ENCODE measurements at regions of chr16 and their contacts with region 1.

Region 1: DNA sequence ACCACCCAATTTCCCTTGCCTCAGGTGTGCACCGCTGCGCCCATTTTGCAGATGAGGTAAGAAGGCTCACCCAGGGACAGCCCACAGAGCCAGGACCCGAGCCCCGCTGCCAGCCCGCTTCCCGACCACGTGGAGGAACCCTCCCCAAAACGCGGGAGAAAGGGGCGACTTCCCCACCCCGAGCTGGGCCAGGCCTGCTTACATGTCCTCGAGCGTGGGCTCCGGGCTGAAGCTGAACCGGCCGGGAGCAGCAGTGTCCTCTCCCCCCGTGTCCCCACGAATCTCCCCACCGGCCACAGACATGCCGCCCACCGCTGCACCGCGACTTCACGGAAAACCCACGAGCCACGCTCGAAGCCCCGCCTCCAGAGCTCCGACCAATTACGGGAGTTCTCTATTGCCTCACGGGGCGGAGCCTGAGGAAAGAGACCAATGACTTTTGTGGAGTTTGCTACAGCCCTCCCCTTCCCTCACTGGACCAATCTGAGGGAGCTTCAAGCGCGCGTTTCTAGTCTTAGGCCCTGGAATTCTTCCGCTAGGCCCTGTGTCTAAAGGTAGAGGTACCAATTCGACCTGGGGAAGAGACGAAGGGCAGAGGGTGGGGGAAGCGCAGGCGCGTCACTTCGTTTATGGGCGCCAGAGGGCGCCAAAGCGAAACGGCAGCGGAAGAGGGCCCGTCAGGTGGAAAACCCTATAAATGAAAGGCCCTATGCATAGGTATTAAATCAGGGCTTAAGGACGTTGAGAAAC is at the start of gene DCTPP1:
- DNase-seq: peak; percentile 91
- ATAC-seq: peak; percentile 98
- H3K4me3 Mint-ChIP-seq: no peak within 1 kb of the TSS
- H3K27ac Mint-ChIP-seq: peak within 1 kb of the TSS; percentile 79
- H3K4me1 Mint-ChIP-seq: peaks cover 17% of the 10 kb centered on the region
- H3K27me3 Mint-ChIP-seq: peaks cover 22% of the 10 kb centered on the region
- CTCF ChIP-seq: peak; percentile 74
- total RNA-seq, gene DCTPP1: 69.0 to 72.2 TPM (median 70.5 TPM) in 3 replicates

Region 2: GRCh38 chr16:29975811-29976511 is 453.9 kb before region 1 on chr16:
- CTCF ChIA-PET with region 1: no interaction called
- POLR2A ChIA-PET with region 1: no interaction called
- DNase-seq: no peak
- ATAC-seq: no peak
- H3K4me3 Mint-ChIP-seq: peak overlapping the region; percentile 92
- H3K27ac Mint-ChIP-seq: peak overlapping the region; percentile 51; the same call in 1 of the 2 replicates
- H3K4me1 Mint-ChIP-seq: peaks cover 27% of the 10 kb centered on the region
- H3K27me3 Mint-ChIP-seq: peaks cover 21% of the 10 kb centered on the region
- CTCF ChIP-seq: no peak

Region 3: GRCh38 chr16:30407102-30407803 is 22.6 kb before region 1 on chr16 and contains the start of gene ZNF771:
- CTCF ChIA-PET with region 1: interaction called, 45 read pairs
- POLR2A ChIA-PET with region 1: no interaction called
- DNase-seq: peak; percentile 96
- ATAC-seq: peak; percentile 84
- H3K4me3 Mint-ChIP-seq: peak within 1 kb of the TSS; percentile 90
- H3K27ac Mint-ChIP-seq: peak within 1 kb of the TSS; percentile 93
- H3K4me1 Mint-ChIP-seq: peaks cover 20% of the 10 kb centered on the region
- H3K27me3 Mint-ChIP-seq: peaks cover 21% of the 10 kb centered on the region
- CTCF ChIP-seq: no peak
- total RNA-seq, gene ZNF771: 10.0 to 12.5 TPM (median 11.3 TPM) in 3 replicates

Region 4: GRCh38 chr16:30493941-30494488 is 64.2 kb after region 1 on chr16:
- CTCF ChIA-PET with region 1: interaction called, 10 read pairs
- POLR2A ChIA-PET with region 1: no interaction called
- DNase-seq: no peak
- ATAC-seq: no peak
- H3K4me3 Mint-ChIP-seq: no peak overlapping the region
- H3K27ac Mint-ChIP-seq: no peak overlapping the region
- H3K4me1 Mint-ChIP-seq: peaks cover 10% of the 10 kb centered on the region
- H3K27me3 Mint-ChIP-seq: peaks cover 9% of the 10 kb centered on the region; the same call in 1 of the 2 replicates
- CTCF ChIP-seq: no peak

Region 5: GRCh38 chr16:30541502-30542329 is 111.9 kb after region 1 on chr16:
- CTCF ChIA-PET with region 1: interaction called, 41 read pairs
- POLR2A ChIA-PET with region 1: no interaction called
- DNase-seq: no peak
- ATAC-seq: peak; percentile 52
- H3K4me3 Mint-ChIP-seq: no peak overlapping the region
- H3K27ac Mint-ChIP-seq: no peak overlapping the region
- H3K4me1 Mint-ChIP-seq: peaks cover 10% of the 10 kb centered on the region
- H3K27me3 Mint-ChIP-seq: no peaks in the 10 kb centered on the region
- CTCF ChIP-seq: no peak

Region 6: GRCh38 chr16:30602616-30603277 is 172.9 kb after region 1 on chr16:
- CTCF ChIA-PET with region 1: interaction called, 30 read pairs
- POLR2A ChIA-PET with region 1: no interaction called
- DNase-seq: no peak
- ATAC-seq: no peak
- H3K4me3 Mint-ChIP-seq: no peak overlapping the region
- H3K27ac Mint-ChIP-seq: peak overlapping the region; percentile 57; the same call in 1 of the 2 replicates
- H3K4me1 Mint-ChIP-seq: no peaks in the 10 kb centered on the region
- H3K27me3 Mint-ChIP-seq: no peaks in the 10 kb centered on the region
- CTCF ChIP-seq: no peak

Region 7: DNA sequence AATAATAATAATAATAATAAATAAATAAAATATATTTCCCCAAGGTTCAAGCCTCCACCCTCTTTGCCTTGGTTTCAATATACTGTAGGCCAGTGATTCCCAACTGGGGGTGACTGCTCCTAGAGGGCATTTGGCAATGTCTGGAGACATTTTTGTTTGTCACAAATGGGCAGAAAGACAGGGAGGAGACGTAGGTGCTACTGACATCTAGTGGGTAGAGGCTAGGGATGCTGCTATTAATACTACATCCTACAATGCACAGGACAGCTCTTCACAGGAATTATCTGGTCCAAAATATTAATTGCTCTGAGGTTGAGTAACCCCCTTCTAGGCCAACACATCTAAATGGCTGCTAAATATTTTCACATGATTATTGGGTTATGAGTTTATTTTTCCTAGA is 208.1 kb after region 1 on chr16:
- CTCF ChIA-PET with region 1: interaction called, 20 read pairs
- POLR2A ChIA-PET with region 1: interaction called, 3 read pairs
- DNase-seq: no peak
- ATAC-seq: peak; percentile 16
- H3K4me3 Mint-ChIP-seq: no peak overlapping the region
- H3K27ac Mint-ChIP-seq: no peak overlapping the region
- H3K4me1 Mint-ChIP-seq: peaks cover 7% of the 10 kb centered on the region
- H3K27me3 Mint-ChIP-seq: peaks cover 3% of the 10 kb centered on the region
- CTCF ChIP-seq: no peak

Region 8: DNA sequence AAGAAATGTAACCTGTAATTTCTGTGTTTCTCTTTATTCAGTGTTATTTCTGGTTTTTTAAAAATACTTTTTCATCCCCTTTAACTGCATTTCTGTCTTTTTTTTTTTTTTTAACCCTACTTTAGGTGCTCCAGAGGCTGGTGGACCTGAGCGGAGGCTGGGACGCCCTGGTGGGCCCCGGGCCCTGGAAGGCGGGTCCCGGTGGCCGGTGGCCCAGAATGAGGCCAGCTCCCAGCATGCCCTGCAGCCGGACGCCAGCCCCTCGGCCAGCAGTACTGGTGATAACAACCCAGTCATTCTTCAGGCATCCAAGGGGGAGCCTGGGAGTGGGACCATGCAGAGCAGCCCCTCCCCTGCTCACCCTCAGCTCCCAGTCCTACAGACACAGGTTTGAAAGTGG is 270.6 kb after region 1 on chr16:
- CTCF ChIA-PET with region 1: no interaction called
- POLR2A ChIA-PET with region 1: no interaction called
- DNase-seq: no peak
- ATAC-seq: no peak
- H3K4me3 Mint-ChIP-seq: no peak overlapping the region
- H3K27ac Mint-ChIP-seq: no peak overlapping the region
- H3K4me1 Mint-ChIP-seq: peaks cover 14% of the 10 kb centered on the region
- H3K27me3 Mint-ChIP-seq: peaks cover 27% of the 10 kb centered on the region
- CTCF ChIP-seq: no peak